ENCODE measurements at regions of chr11 and their contacts with region 1.

Region 1: GRCh38 chr11:70158201-70158600 is 44.9 kb upstream of the FADD start:
- DNase-seq: peak; percentile 19 to 80
- H3K4me3 ChIP-seq: no peak overlapping the region
- H3K27ac ChIP-seq: no peak overlapping the region
- H3K4me1 ChIP-seq: no peaks in the 10 kb centered on the region; a peak in 2 of 7 replicates
- H3K27me3 ChIP-seq: no peaks in the 10 kb centered on the region; a peak in 1 of 7 replicates
- CTCF ChIP-seq: peak; percentile 85 to 91 (median 88)
- EP300 ChIP-seq: no peak
- POLR2A ChIP-seq: no peak
- RAD21 ChIP-seq: peak; percentile 86 to 88

Region 2: GRCh38 chr11:70090961-70091381 is 67.2 kb before region 1 on chr11:
- CTCF ChIA-PET with region 1: interaction called, 11 read pairs
- POLR2A ChIA-PET with region 1: no interaction called
- DNase-seq: no peak
- H3K4me3 ChIP-seq: no peak overlapping the region
- H3K27ac ChIP-seq: no peak overlapping the region
- H3K4me1 ChIP-seq: peaks cover 0 to 6% (median 4%) of the 10 kb centered on the region in 4 experiments; a peak in 6 of 7 replicates
- H3K27me3 ChIP-seq: no peaks in the 10 kb centered on the region; a peak in 1 of 7 replicates
- CTCF ChIP-seq: no peak
- EP300 ChIP-seq: no peak
- POLR2A ChIP-seq: no peak
- RAD21 ChIP-seq: no peak

Region 3: DNA sequence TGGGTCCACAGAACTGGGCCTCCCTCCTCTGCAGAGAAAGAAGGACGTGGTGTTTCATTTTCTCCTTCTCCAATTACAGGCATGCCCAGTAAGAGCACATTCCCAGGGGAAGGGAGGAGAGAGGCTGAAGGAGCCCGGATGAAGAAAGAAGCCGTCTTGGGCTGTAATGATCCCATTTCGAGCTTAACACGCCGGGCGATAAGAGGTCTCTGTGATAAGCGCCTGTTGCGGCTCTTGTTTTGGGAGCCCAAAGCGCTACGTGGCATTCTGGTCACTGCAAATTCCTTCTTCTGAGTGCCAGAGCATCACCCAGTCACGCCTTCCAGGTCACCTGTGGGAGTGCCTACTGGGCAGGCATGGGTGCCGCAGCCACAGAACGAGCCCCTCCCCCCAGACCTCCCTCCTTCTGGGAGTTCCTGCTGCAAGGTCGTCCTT is 22.6 kb before region 1 on chr11:
- CTCF ChIA-PET with region 1: interaction called, 10 read pairs
- POLR2A ChIA-PET with region 1: no interaction called
- DNase-seq: no peak
- H3K4me3 ChIP-seq: no peak overlapping the region
- H3K27ac ChIP-seq: no peak overlapping the region
- H3K4me1 ChIP-seq: peaks cover 0 to 4% (median 0%) of the 10 kb centered on the region in 4 experiments; a peak in 3 of 7 replicates
- H3K27me3 ChIP-seq: peaks cover 0 to 2% (median 0%) of the 10 kb centered on the region in 4 experiments; a peak in 2 of 7 replicates
- CTCF ChIP-seq: no peak
- EP300 ChIP-seq: no peak
- POLR2A ChIP-seq: no peak
- RAD21 ChIP-seq: no peak

Region 4: DNA sequence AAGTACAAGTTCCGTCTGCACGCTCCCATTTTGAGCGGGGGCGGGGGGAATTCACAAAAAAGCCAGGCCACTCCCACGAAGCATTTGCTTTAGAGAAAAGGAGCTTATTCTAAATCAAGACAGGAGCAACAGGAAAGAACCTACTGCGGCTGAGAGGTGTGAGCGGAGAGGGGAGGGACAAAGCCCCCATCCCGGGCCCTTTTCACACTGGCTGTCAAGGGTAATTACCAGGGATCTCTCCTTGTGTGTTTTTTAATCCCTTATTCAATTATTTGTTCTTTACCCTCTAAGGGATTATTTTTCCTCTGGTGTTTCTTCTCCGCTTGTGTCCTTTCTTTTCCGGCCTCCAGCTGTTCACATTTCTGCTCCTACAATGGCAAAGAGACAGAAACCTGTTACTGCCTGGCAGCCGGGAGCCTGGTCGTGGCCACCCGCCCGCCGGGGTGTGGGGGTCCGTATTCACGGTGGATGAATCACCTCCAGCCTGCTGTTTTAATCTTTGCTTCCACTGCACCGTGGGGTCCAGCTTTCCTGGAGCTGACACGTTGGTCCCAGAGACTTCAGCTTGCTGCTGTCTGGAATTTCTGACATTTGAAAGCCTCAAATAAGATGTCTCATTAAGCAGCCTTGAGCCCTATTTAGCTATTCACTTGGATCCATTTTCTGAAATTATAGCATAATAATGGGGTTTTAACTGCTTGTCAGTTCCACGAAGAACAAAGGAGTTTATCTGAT is 16.5 kb before region 1 on chr11:
- CTCF ChIA-PET with region 1: interaction called, 23 read pairs
- POLR2A ChIA-PET with region 1: interaction called, 6 read pairs
- DNase-seq: peak in 1 of 2 experiments; percentile 17
- H3K4me3 ChIP-seq: peak overlapping the region in 2 of 4 experiments; percentile 24 to 41; a peak in 5 of 8 replicates
- H3K27ac ChIP-seq: no peak overlapping the region
- H3K4me1 ChIP-seq: peaks cover 3 to 26% (median 15%) of the 10 kb centered on the region in 4 experiments
- H3K27me3 ChIP-seq: peaks cover 0 to 20% (median 8%) of the 10 kb centered on the region in 4 experiments; a peak in 5 of 7 replicates
- CTCF ChIP-seq: no peak
- EP300 ChIP-seq: no peak
- POLR2A ChIP-seq: no peak
- RAD21 ChIP-seq: no peak

Region 5: DNA sequence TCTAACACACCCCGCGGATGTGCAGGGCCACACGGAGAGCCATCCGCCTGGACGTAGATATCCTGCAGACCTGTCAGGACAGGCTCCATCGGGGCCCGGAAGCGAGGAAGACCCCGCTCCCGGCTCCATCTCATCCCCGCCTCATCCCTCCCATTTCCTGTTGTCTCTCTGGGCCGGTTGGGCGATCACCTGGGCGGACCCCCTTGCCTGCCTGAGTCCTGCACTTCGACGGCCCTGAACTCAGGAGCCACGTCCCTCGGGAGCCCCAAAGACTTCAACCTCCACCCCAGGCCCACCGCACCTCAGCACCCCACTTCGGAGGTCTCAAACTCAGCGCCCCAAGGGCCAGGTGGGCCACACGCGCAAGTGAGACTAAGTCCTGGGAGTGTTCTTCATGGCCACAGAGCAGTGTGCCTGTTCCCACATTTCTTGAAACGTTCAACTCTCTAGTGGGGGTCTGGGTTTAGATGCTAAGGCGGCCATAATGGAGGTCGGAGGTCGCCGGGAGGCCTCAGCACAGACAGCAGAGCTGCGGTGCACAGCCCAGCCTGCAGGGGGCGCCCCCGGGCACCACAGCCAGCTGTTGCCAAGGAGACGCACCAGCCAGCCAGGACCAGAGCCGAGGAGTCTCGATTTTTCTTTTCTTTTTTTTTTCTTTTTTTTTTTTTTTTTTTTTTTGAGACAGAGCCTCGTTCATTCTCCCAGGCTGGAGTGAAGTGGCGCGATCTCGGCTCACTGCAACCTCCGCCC is 18.9 kb after region 1 on chr11:
- CTCF ChIA-PET with region 1: interaction called, 78 read pairs
- POLR2A ChIA-PET with region 1: no interaction called
- DNase-seq: peak; percentile 27 to 97
- H3K4me3 ChIP-seq: no peak overlapping the region
- H3K27ac ChIP-seq: no peak overlapping the region
- H3K4me1 ChIP-seq: peaks cover 0 to 7% (median 2%) of the 10 kb centered on the region in 4 experiments; a peak in 4 of 7 replicates
- H3K27me3 ChIP-seq: no peaks in the 10 kb centered on the region
- CTCF ChIP-seq: peak; percentile 77 to 94 (median 83)
- EP300 ChIP-seq: no peak
- POLR2A ChIP-seq: no peak
- RAD21 ChIP-seq: peak; percentile 18 to 39; a peak in 3 of 4 replicates

Region 6: DNA sequence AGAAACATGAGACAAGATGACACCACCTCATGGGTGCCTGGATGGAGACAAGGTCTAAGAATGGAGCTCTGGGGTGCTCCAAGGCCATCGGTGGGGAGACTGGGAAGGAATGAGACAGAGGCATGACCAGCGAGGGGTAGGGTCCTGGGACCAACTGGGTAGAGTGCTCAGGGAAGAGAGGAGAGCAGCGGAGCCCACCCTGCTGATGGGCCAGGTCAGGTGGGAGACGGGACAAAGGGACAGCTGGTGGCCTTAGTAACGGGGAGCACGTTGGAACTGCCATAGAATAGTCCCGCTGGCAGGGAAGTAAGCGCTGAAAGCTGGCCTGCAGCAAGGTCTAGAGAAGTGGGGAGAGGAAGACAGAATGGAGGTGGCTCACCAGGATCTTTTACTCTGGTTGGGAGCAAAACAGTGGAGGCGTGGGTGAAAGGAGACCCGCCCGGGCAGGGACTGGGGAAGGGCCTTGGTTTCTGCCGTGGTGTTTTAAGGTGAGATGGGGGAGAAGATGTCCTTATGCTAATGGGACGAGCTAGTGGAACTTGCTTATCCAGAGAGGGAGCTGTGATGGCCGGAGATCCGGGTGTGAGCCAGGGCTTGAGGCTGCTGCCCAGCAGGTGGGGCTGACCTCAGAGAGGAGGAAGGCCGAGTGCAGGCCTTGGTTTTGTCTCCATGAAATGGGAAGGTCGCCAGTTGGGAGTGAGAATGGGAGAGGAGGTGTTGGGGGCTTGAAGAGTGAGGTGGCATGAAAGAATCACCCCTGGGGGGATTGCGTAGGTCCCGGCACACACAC is 183.7 kb after region 1 on chr11:
- CTCF ChIA-PET with region 1: no interaction called
- POLR2A ChIA-PET with region 1: no interaction called
- DNase-seq: no peak
- H3K4me3 ChIP-seq: no peak overlapping the region
- H3K27ac ChIP-seq: no peak overlapping the region
- H3K4me1 ChIP-seq: no peaks in the 10 kb centered on the region
- H3K27me3 ChIP-seq: no peaks in the 10 kb centered on the region
- CTCF ChIP-seq: no peak
- EP300 ChIP-seq: no peak
- POLR2A ChIP-seq: no peak
- RAD21 ChIP-seq: no peak

Measured in H1 (cell line).